Gastrocnemius medialis (tissue), 4 donors: ENCODE measurements at regions of chr1 and their contacts with region 1.

Region 1: GRCh38 chr1:210143465-210144062 is 89.0 kb upstream of the SERTAD4 start:
- DNase-seq: peak; percentile 23 to 45
- ATAC-seq: no peak
- H3K4me3 ChIP-seq: no peak overlapping the region
- H3K27ac ChIP-seq: no peak overlapping the region
- H3K4me1 ChIP-seq: no peaks in the 10 kb centered on the region
- H3K27me3 ChIP-seq: peaks cover 0 to 3% (median 0%) of the 10 kb centered on the region in 3 donors
- CTCF ChIP-seq: peak; percentile 42 to 64 (median 51)
- POLR2A ChIP-seq: no peak

Region 2: DNA sequence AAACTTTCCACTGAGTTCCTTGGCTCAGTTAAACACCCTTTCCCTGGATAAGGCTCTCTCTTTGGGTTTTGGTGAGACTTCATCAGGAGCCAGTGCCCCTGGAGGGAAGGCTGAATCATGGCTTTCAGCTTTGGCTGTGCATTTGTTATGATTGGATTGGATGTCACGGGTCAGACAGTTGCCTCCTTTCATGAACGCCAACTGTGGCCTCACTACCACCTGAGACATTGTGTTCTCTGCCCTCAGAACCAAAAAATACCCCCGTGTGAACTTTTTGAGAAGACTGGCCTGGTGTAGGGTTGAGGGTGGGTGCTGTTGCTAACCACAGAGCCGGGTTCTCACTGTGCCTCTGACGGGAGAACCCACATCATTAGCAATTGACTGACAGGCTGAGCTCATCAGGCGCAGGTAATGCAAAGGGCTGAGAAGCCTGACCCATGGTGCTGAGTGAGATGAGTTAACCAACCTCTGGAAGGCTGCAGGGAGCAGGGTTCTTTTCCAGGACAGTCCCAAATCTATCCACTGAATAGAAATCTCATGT is 250.8 kb after region 1 on chr1:
- in situ Hi-C with region 1: loop called in 1 of 4 experiments (anchors 10 kb)
- intact Hi-C with region 1: no loop called
- DNase-seq: no peak
- ATAC-seq: no peak
- H3K4me3 ChIP-seq: no peak overlapping the region
- H3K27ac ChIP-seq: no peak overlapping the region
- H3K4me1 ChIP-seq: no peaks in the 10 kb centered on the region
- H3K27me3 ChIP-seq: no peaks in the 10 kb centered on the region
- CTCF ChIP-seq: no peak
- POLR2A ChIP-seq: no peak

Region 3: GRCh38 chr1:210400043-210400840 is 256.7 kb after region 1 on chr1:
- in situ Hi-C with region 1: loop called in 1 of 4 experiments (anchors 10 kb)
- intact Hi-C with region 1: loop called (anchors 10 kb)
- DNase-seq: no peak
- ATAC-seq: no peak
- H3K4me3 ChIP-seq: no peak overlapping the region
- H3K27ac ChIP-seq: no peak overlapping the region
- H3K4me1 ChIP-seq: no peaks in the 10 kb centered on the region
- H3K27me3 ChIP-seq: no peaks in the 10 kb centered on the region
- CTCF ChIP-seq: peak in 4 of 5 experiments; percentile 15 to 61 (median 50)
- POLR2A ChIP-seq: no peak